ENCODE measurements at regions of chr5 and their contacts with region 1.

Region 1: DNA sequence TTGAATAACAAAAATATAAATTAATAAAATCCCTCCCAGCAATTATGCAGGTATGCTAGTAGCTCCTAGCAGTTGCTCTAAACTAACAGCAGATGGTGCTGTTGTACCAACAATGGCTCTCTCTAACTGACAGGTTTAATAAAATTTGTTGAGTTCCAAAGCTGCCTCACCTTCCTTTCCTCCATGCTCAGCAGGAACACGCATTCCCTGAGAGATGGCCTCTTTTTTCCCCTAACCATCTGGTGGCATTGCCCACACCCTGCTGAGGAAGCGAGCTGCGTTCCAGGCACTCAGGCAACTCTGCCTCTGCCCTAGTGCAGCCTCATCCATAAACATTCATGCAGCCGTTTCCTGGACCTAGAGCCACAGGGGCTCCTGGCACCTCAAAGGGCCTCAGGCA is 106.2 kb downstream of the KLHL3 start:
- DNase-seq: peak; percentile 60 to 77
- ATAC-seq: peak; percentile 66 to 92
- H3K4me3 ChIP-seq: no peak overlapping the region
- H3K27ac ChIP-seq: no peak overlapping the region
- H3K4me1 ChIP-seq: no peaks in the 10 kb centered on the region
- CTCF ChIP-seq: peak; percentile 87
- EP300 ChIP-seq: no peak
- POLR2A ChIP-seq: no peak
- RAD21 ChIP-seq: peak; percentile 89 to 91

Region 2: DNA sequence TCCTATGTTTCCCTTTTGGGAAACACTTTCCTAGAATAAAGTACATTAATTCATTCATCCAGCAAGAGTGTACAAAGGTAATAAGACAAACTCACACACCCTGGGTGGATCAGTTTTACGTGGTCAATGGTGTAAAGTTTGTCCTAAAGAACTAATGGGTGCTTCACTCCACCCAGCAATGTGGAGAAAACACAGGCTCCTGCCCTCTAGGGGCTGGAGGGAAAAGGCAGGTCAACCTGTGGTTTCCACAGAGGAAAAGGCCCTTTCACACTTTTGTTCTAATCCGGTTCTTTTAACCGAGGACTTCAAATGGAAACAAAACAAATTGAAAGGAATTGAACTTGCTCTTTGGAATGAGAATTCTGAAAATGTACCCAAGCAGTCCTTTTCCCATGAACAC is 49.6 kb before region 1 on chr5:
- CTCF ChIA-PET with region 1: no interaction called
- POLR2A ChIA-PET with region 1: no interaction called
- DNase-seq: peak in 1 of 2 experiments; percentile 20
- ATAC-seq: peak; percentile 48 to 79; a peak in 4 of 6 replicates
- H3K4me3 ChIP-seq: no peak overlapping the region
- H3K27ac ChIP-seq: no peak overlapping the region
- H3K4me1 ChIP-seq: no peaks in the 10 kb centered on the region
- CTCF ChIP-seq: no peak
- EP300 ChIP-seq: no peak
- POLR2A ChIP-seq: no peak
- RAD21 ChIP-seq: 0 out of 5 replicates have a peak, but pooled peaks of 1 of the 2 experiments have one; percentile 12

Region 3: GRCh38 chr5:137619191-137619870 is 10.3 kb before region 1 on chr5:
- CTCF ChIA-PET with region 1: interaction called, 45 read pairs
- POLR2A ChIA-PET with region 1: no interaction called
- DNase-seq: no peak
- ATAC-seq: no peak
- H3K4me3 ChIP-seq: no peak overlapping the region
- H3K27ac ChIP-seq: no peak overlapping the region
- H3K4me1 ChIP-seq: no peaks in the 10 kb centered on the region
- CTCF ChIP-seq: no peak
- EP300 ChIP-seq: no peak
- POLR2A ChIP-seq: no peak
- RAD21 ChIP-seq: no peak

Region 4: GRCh38 chr5:137641148-137641547 is 11.5 kb after region 1 on chr5:
- CTCF ChIA-PET with region 1: interaction called, 62 read pairs
- POLR2A ChIA-PET with region 1: no interaction called
- DNase-seq: no peak
- ATAC-seq: no peak
- H3K4me3 ChIP-seq: no peak overlapping the region
- H3K27ac ChIP-seq: no peak overlapping the region
- H3K4me1 ChIP-seq: no peaks in the 10 kb centered on the region
- CTCF ChIP-seq: no peak
- EP300 ChIP-seq: no peak
- POLR2A ChIP-seq: no peak
- RAD21 ChIP-seq: no peak